Activated B cell treated with CpG ODN at 0.5 μM for 24 hours (primary cell): ENCODE measurements at regions of chr13 and their contacts with region 1.

Region 1: GRCh38 chr13:72774019-72774418 is 7.7 kb downstream of the DIS3 start:
- DNase-seq: no peak
- ATAC-seq: no peak
- H3K4me3 Mint-ChIP-seq: no peak overlapping the region
- H3K27ac Mint-ChIP-seq: no peak overlapping the region
- H3K4me1 Mint-ChIP-seq: peaks cover 7% of the 10 kb centered on the region
- H3K27me3 Mint-ChIP-seq: no peaks in the 10 kb centered on the region
- CTCF ChIP-seq: no peak

Region 2: GRCh38 chr13:72745260-72745659 is 28.8 kb before region 1 on chr13:
- CTCF ChIA-PET with region 1: no interaction called
- POLR2A ChIA-PET with region 1: no interaction called
- intact Hi-C with region 1: loop called (anchors 2 kb)
- DNase-seq: no peak
- ATAC-seq: no peak
- H3K4me3 Mint-ChIP-seq: no peak overlapping the region
- H3K27ac Mint-ChIP-seq: no peak overlapping the region
- H3K4me1 Mint-ChIP-seq: no peaks in the 10 kb centered on the region
- H3K27me3 Mint-ChIP-seq: no peaks in the 10 kb centered on the region
- CTCF ChIP-seq: no peak

Region 3: DNA sequence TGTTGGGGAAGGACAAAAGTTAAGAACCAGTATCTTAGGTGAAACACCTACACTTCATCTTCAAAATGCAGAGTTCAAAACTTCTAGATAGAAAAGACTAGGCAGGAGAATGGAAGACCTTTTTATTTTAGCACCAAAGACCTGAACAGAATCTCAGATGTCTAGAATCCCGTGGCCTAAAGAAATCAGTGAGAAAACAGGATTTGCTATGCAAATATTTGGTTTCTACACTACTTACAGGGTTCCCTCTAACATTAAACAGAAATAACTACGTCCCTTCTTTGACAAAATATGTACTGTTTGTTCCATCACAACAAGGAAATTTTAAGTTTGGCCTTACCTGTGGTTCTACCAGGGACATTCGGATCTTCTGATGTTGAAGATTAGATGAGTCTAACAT is 13.8 kb before region 1 on chr13:
- CTCF ChIA-PET with region 1: no interaction called
- POLR2A ChIA-PET with region 1: no interaction called
- intact Hi-C with region 1: loop called (anchors 2 kb)
- DNase-seq: no peak
- ATAC-seq: no peak
- H3K4me3 Mint-ChIP-seq: no peak overlapping the region
- H3K27ac Mint-ChIP-seq: no peak overlapping the region
- H3K4me1 Mint-ChIP-seq: peaks cover 5% of the 10 kb centered on the region
- H3K27me3 Mint-ChIP-seq: no peaks in the 10 kb centered on the region
- CTCF ChIP-seq: no peak

Region 4: DNA sequence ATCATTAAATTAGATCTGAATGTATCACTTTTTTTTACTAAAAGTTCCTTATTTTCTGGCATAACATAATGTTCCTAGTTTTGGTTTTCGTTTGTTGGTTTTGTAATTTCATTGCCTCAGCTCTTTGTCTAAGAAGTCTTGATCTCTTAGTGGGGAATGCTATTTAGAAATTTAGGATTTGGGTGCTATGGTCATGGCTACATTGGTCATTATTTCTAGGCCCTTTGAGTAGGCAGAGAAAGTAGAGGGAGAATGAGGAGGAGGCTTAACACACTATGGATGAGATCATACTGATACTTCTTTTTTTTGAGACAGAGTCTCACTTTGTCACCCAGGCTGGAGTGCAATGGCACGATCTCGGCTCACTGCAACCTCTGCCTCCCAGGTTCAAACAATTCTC is 49.7 kb after region 1 on chr13:
- CTCF ChIA-PET with region 1: no interaction called
- POLR2A ChIA-PET with region 1: no interaction called
- intact Hi-C with region 1: no loop called
- DNase-seq: no peak
- ATAC-seq: no peak
- H3K4me3 Mint-ChIP-seq: no peak overlapping the region
- H3K27ac Mint-ChIP-seq: no peak overlapping the region
- H3K4me1 Mint-ChIP-seq: no peaks in the 10 kb centered on the region
- H3K27me3 Mint-ChIP-seq: no peaks in the 10 kb centered on the region
- CTCF ChIP-seq: no peak

Region 5: GRCh38 chr13:72839831-72840426 is 65.9 kb after region 1 on chr13:
- CTCF ChIA-PET with region 1: no interaction called
- POLR2A ChIA-PET with region 1: no interaction called
- intact Hi-C with region 1: no loop called
- DNase-seq: no peak
- ATAC-seq: peak; percentile 56
- H3K4me3 Mint-ChIP-seq: no peak overlapping the region
- H3K27ac Mint-ChIP-seq: no peak overlapping the region
- H3K4me1 Mint-ChIP-seq: no peaks in the 10 kb centered on the region
- H3K27me3 Mint-ChIP-seq: no peaks in the 10 kb centered on the region
- CTCF ChIP-seq: no peak